Ascending aorta (tissue), 2 donors: ENCODE measurements at regions of chr3 and their contacts with region 1.

Region 1: DNA sequence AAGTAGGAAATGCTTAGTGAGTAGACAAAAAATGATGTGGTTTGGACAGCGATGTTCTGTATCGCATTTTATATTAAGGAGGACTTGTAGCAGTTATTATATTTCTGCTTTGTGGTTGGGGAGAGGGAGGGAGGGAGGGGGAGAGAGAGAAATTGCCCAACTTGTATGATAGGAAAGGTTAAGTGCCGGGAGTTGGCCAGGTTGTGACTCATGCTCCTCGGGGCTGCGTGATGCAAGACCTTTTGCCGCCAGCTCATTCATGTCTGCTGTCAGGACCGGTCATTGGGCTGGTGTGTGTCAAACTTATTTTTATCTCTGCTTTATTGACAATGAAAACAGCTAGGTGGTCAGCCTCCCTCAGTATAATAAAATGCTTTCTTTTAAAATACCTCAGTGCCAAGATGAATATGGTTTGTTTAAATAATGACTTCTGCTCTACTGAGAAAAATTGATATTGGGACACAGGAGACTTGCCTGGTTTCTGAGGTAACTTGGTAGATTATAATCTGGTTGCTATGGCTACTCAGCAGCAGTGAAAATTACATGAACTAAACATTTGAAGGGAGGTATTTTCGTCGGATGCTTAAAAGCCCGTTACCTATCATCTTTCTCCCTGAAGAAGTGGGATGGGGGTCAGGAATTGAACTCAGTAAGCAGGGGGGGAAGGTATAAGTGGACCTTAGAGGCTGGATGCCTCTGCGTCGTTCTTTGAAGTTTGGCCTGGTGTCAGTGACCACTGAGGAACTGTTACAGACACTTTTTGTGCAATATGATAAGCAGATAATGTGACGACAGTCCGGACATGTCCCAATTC is 90.7 kb downstream of the FNDC3B start:
- DNase-seq: peak; percentile 91 to 98
- H3K4me3 ChIP-seq: no peak overlapping the region
- H3K27ac ChIP-seq: peak overlapping the region; percentile 79 to 83
- H3K4me1 ChIP-seq: peaks cover 0 to 41% of the 10 kb centered on the region in 2 donors
- H3K27me3 ChIP-seq: no peaks in the 10 kb centered on the region
- CTCF ChIP-seq: no peak

Region 2: GRCh38 chr3:172153335-172153861 is 23.3 kb after region 1 on chr3:
- intact Hi-C with region 1: loop called (anchors 1 kb)
- DNase-seq: peak; percentile 95 to 98
- H3K4me3 ChIP-seq: peak overlapping the region; percentile 15 to 41
- H3K27ac ChIP-seq: peak overlapping the region; percentile 92 to 97
- H3K4me1 ChIP-seq: peaks cover 38 to 47% of the 10 kb centered on the region in 2 donors
- H3K27me3 ChIP-seq: no peaks in the 10 kb centered on the region
- CTCF ChIP-seq: no peak

Region 3: DNA sequence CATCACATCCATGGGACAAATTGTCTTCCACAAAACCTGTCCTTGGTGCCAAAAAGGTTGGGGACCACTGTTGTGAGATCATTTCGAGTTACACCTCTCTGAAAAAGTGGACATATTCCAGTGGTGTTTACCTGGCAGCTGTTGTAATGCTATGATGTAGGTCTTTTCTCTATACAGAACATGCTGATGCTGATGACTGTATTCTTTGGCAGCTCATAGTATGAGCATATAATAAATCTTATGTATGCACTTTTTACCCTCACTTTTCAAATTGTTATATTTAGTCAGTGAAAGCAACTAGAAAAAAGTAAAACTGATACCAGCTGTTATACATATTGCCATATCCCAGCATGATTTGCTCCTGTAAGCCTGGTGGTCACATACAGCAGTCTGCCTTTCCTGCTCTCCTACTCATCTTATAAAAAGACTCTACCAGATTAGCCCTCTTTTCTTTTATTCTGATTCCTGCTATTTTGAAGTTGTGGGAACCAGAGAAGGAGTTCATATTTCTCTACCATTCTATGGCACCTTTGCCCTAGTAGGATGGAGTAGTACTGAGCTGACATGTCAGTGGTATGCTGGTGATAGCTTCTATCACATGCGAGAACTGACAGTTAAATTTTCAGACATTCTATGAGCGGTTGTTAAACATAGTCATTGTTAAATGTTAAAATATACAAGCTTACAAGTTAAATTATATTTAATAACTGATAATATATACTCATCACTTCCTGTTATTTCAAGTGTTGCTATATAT is 38.0 kb after region 1 on chr3:
- intact Hi-C with region 1: no loop called
- DNase-seq: no peak
- H3K4me3 ChIP-seq: no peak overlapping the region
- H3K27ac ChIP-seq: no peak overlapping the region
- H3K4me1 ChIP-seq: peaks cover 0 to 32% of the 10 kb centered on the region in 2 donors
- H3K27me3 ChIP-seq: no peaks in the 10 kb centered on the region
- CTCF ChIP-seq: no peak

Region 4: DNA sequence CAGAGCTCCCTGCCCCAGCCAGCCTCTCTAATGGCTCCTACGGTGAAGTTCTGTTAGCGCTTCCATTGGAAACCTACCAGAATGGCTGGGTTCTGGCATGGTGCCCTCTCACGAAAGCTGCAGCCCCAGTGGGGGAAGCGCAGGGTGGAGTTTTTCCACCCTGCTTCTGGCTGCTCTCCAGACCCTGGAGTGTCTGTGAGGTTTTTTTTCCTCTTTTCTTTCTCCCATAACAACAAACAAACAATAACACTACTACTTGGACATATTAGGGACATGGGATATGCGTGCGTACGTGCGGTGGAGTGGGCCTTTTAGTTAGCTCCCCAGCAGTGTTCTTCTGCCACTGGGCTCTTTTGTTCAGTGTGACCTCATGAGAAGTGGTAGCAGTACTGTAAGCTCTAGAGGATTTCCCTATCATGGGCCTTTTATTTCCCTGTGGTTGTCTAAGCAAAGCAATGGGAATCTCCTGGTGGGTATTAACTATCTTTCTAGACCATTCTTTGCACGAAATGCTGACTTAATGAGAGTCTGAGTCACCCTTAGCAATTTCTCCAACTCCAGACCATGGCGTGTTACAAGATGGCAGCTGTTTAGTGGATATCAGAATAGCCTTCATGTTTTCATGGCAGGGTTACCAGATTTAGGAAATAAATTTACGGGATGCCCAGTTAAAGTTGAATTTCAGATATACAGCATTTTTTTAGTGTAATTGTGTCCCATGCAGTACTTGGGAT is 71.2 kb after region 1 on chr3:
- intact Hi-C with region 1: loop called (anchors 5 kb)
- DNase-seq: peak; percentile 12 to 72
- H3K4me3 ChIP-seq: no peak overlapping the region
- H3K27ac ChIP-seq: peak overlapping the region; percentile 75 to 88
- H3K4me1 ChIP-seq: peaks cover 11 to 46% of the 10 kb centered on the region in 2 donors
- H3K27me3 ChIP-seq: no peaks in the 10 kb centered on the region
- CTCF ChIP-seq: no peak

Region 5: GRCh38 chr3:172256101-172256734 is 126.1 kb after region 1 on chr3:
- intact Hi-C with region 1: loop called (anchors 5 kb)
- DNase-seq: peak in 1 of 2 donors; percentile 83
- H3K4me3 ChIP-seq: no peak overlapping the region
- H3K27ac ChIP-seq: peak overlapping the region; percentile 89 to 91
- H3K4me1 ChIP-seq: peaks cover 25 to 54% of the 10 kb centered on the region in 2 donors
- H3K27me3 ChIP-seq: no peaks in the 10 kb centered on the region
- CTCF ChIP-seq: no peak

Region 6: DNA sequence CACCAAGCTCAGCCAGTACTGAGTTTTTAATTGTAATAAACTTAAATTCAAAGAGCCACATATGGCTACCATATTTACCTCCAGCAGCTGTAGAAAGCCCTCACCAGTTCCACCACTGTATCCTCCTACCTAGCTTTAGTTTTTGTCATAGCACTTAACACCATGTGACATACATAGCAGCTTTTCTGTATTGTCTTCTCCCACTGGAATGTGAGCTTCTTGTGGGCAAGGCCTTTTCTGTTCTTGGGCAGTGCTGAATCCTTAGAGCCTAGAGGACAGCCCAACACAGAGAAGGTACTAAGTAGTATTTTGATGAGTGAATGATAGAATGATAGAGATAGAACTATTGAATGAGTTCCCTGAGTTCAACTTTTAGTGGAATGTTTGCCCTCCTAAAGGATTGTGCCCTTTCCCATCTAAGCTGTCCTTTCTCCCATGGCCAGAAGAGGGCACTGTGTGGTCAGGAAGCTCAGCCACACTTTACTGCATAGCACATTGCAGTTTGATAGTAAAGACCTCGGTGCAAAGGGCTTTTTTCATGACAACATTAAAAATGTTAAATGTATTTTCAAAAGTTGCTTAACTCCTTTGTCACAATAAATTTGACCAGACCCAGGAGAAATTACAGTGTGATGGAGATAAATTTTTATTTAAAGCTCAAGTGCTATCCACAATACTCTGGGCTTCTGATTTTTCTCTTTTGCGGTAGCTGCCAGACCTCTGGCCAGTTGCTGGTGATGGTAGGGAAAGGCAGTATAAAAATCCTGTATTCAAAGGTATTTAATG is 202.4 kb after region 1 on chr3:
- intact Hi-C with region 1: loop called (anchors 5 kb)
- DNase-seq: peak in 1 of 2 donors; percentile 84
- H3K4me3 ChIP-seq: peak overlapping the region; percentile 13 to 24
- H3K27ac ChIP-seq: peak overlapping the region; percentile 50 to 57
- H3K4me1 ChIP-seq: no peaks in the 10 kb centered on the region
- H3K27me3 ChIP-seq: no peaks in the 10 kb centered on the region
- CTCF ChIP-seq: peak; percentile 74 to 89 (median 86)